ENCODE measurements at regions of chr16 and their contacts with region 1.

Region 1: DNA sequence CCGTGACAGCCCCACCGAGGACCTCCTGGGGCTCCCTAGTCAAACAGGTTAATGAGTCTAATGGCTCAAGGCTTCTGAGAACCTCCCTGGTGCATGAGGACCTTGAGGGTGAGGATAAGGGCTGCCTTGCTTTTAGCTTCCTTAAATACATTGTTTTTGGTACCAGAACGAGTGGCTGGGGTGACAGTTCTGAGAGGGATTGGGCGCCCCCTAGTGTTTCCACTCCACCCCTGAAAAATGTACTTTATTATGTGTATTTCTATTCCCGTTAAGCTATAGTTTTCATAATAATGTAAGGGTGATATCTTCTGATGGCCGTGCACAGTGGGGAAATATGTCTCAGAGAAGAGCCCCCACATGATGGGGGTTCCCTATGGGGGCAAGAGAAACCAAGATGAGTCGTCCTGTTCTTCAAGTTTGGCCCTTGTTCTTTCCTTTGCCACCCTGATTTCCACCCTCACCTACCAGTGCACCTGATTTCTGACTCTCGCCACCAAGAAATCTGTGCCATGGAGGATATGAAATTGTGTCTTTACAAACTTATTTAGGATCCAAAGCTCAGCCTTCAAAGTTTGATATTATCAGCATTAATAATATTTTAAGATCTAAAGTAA is 14.5 kb upstream of the VWA3A start:
- DNase-seq: peak; percentile 72 to 87 (median 84)
- H3K4me3 ChIP-seq: no peak overlapping the region
- H3K27ac ChIP-seq: no peak overlapping the region
- H3K4me1 ChIP-seq: no peaks in the 10 kb centered on the region
- H3K27me3 ChIP-seq: no peaks in the 10 kb centered on the region

Region 2: GRCh38 chr16:21982108-21982507 is 95.7 kb before region 1 on chr16:
- CTCF ChIA-PET with region 1: interaction called, 12 read pairs
- POLR2A ChIA-PET with region 1: no interaction called
- DNase-seq: peak; percentile 5 to 19 (median 9)
- H3K4me3 ChIP-seq: no peak overlapping the region
- H3K27ac ChIP-seq: no peak overlapping the region
- H3K4me1 ChIP-seq: no peaks in the 10 kb centered on the region
- H3K27me3 ChIP-seq: no peaks in the 10 kb centered on the region

Region 3: GRCh38 chr16:22007509-22008214 is 70.1 kb before region 1 on chr16 and contains the start of gene MOSMO:
- CTCF ChIA-PET with region 1: interaction called, 181 read pairs
- POLR2A ChIA-PET with region 1: interaction called, 4 read pairs
- DNase-seq: peak; percentile 50 to 86 (median 78)
- H3K4me3 ChIP-seq: peak within 1 kb of the TSS; percentile 82 to 91 (median 85)
- H3K27ac ChIP-seq: peak within 1 kb of the TSS in 1 of 2 experiments; percentile 61
- H3K4me1 ChIP-seq: peaks cover 4 to 21% (median 17%) of the 10 kb centered on the region in 4 experiments
- H3K27me3 ChIP-seq: peaks cover 0 to 2% (median 0%) of the 10 kb centered on the region in 5 experiments

Region 4: DNA sequence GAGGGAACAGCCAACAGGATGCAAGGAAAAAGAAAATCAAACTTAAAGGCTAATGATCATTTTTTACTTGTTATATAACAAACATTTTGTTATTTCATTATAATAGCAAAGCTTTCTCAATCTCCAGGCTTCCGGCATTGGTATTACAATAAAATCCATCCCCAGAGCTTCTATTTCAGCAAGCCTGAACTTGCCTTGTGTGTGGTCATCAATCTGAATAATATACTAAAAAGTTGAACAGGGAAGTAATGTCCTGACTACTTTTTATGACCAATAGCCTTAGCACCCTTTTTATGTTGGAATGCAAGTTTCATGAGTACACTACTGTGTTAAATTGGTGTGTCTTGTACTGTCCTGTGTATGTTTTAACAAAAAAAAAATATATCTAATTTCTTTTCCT is 12.6 kb before region 1 on chr16:
- CTCF ChIA-PET with region 1: interaction called, 30 read pairs
- POLR2A ChIA-PET with region 1: no interaction called
- DNase-seq: no peak
- H3K4me3 ChIP-seq: no peak overlapping the region
- H3K27ac ChIP-seq: no peak overlapping the region
- H3K4me1 ChIP-seq: peaks cover 0 to under 1% (median 0%) of the 10 kb centered on the region in 4 experiments
- H3K27me3 ChIP-seq: no peaks in the 10 kb centered on the region

Region 5: GRCh38 chr16:22098405-22099255 is 20.8 kb after region 1 on chr16:
- CTCF ChIA-PET with region 1: interaction called, 22 read pairs
- POLR2A ChIA-PET with region 1: no interaction called
- DNase-seq: peak; percentile 56 to 76 (median 76)
- H3K4me3 ChIP-seq: peak overlapping the region in 1 of 7 experiments; percentile 43
- H3K27ac ChIP-seq: no peak overlapping the region
- H3K4me1 ChIP-seq: no peaks in the 10 kb centered on the region
- H3K27me3 ChIP-seq: no peaks in the 10 kb centered on the region

Region 6: GRCh38 chr16:22174642-22175041 is 96.8 kb after region 1 on chr16:
- CTCF ChIA-PET with region 1: no interaction called
- POLR2A ChIA-PET with region 1: no interaction called
- DNase-seq: no peak
- H3K4me3 ChIP-seq: no peak overlapping the region
- H3K27ac ChIP-seq: no peak overlapping the region
- H3K4me1 ChIP-seq: no peaks in the 10 kb centered on the region
- H3K27me3 ChIP-seq: no peaks in the 10 kb centered on the region

Measured in common myeloid progenitor, CD34-positive (primary cell).